OCI-LY7 (cell line): ENCODE measurements at regions of chr6 and their contacts with region 1.

Region 1: DNA sequence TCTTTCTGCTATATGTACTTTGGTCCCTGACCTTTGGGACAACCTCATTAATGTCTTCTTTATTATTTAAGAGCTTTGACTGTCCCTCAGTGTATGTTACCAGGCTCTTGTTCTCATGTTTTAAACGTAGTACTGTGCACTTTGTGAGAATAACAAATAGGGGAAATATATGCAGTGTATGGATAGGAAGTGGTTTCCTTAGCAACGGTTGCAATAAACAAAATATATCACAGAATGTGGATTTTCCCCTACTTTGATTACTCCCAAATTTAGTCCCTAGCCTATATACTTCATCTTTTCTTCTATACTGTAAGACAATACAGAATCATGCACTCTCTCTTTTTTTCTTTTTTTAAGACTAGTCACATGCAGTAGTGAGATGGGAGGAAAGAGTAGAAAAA is 123.8 kb upstream of the AKIRIN2 start:
- DNase-seq: no peak
- H3K4me3 ChIP-seq: no peak overlapping the region
- H3K27ac ChIP-seq: no peak overlapping the region
- H3K4me1 ChIP-seq: peaks cover 56% of the 10 kb centered on the region
- CTCF ChIP-seq: no peak

Region 2: GRCh38 chr6:87808005-87808757 is 17.6 kb before region 1 on chr6:
- CTCF ChIA-PET with region 1: no interaction called
- POLR2A ChIA-PET with region 1: interaction called, 43 read pairs
- intact Hi-C with region 1: no loop called
- DNase-seq: no peak
- H3K4me3 ChIP-seq: no peak overlapping the region
- H3K27ac ChIP-seq: no peak overlapping the region
- H3K4me1 ChIP-seq: peaks cover 49% of the 10 kb centered on the region
- CTCF ChIP-seq: no peak